Activated naive CD4-positive, alpha-beta T cell treated with anti-CD3 and anti-CD28 coated beads for 36 hours (primary cell): ENCODE measurements at regions of chr6 and their contacts with region 1.

Region 1: GRCh38 chr6:129683601-129684322 is 26.2 kb downstream of the ARHGAP18 start:
- DNase-seq: peak; percentile 79
- H3K4me3 Mint-ChIP-seq: peak overlapping the region; percentile 2
- H3K27ac Mint-ChIP-seq: peak overlapping the region; percentile 68
- H3K4me1 Mint-ChIP-seq: peaks cover 45% of the 10 kb centered on the region
- H3K27me3 Mint-ChIP-seq: no peaks in the 10 kb centered on the region

Region 2: DNA sequence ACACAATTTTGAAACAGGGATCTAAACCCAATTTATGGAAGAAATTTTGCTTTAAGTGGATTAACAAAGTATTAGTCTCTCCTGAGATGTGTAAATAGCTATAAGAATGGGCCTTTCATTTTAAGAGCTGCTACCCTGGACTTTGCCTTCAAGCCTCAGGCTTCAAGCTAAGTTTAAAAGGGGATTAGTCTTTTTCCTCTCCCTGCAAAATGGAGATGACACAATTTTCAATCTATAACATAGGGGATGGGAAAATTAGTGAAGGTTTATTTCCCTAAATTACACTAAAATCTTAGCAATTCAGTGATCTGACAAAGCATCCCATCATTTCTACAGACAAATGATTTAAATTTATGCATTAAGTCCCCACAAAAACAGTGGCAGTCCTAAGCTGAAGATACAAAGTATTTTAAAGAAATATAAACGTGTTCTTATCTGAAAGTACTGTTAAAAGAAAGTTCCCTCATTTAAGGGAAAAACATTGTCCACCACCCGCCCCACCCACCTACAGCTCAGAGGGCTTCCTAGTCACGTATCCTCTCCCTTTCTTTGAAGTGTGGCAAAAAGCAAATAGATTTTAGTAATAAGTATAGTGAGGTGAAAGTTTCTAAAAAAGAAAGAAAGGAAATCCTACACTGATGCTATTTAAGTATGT is 11.7 kb after region 1 on chr6:
- CTCF ChIA-PET with region 1: interaction called, 4 read pairs
- intact Hi-C with region 1: loop called (anchors 1 kb)
- DNase-seq: peak; percentile 67
- H3K4me3 Mint-ChIP-seq: no peak overlapping the region
- H3K27ac Mint-ChIP-seq: no peak overlapping the region
- H3K4me1 Mint-ChIP-seq: peaks cover 17% of the 10 kb centered on the region
- H3K27me3 Mint-ChIP-seq: no peaks in the 10 kb centered on the region

Region 3: GRCh38 chr6:129709769-129710449 is 26.1 kb after region 1 on chr6 and contains the start of gene ARHGAP18:
- CTCF ChIA-PET with region 1: interaction called, 3 read pairs
- intact Hi-C with region 1: loop called (anchors 1 kb)
- DNase-seq: peak; percentile 81
- H3K4me3 Mint-ChIP-seq: peak within 1 kb of the TSS; percentile 90
- H3K27ac Mint-ChIP-seq: peak within 1 kb of the TSS; percentile 51
- H3K4me1 Mint-ChIP-seq: peaks cover 16% of the 10 kb centered on the region
- H3K27me3 Mint-ChIP-seq: peaks cover 3% of the 10 kb centered on the region
- total RNA-seq, gene ARHGAP18: 3.2 to 3.7 TPM